Right lobe of liver (tissue), 6 donors: ENCODE measurements at regions of chr6 and their contacts with region 1.

Region 1: GRCh38 chr6:28136585-28137504 is 4.8 kb upstream of the ZKSCAN8 start:
- DNase-seq: peak; percentile 89 to 94 (median 91)
- ATAC-seq: peak; percentile 83 to 89 (median 86)
- H3K4me3 ChIP-seq: peak overlapping the region; percentile 63 to 84 (median 81)
- H3K27ac ChIP-seq: peak overlapping the region; percentile 82 to 85 (median 85)
- H3K4me1 ChIP-seq: peaks cover 0 to 10% (median 4%) of the 10 kb centered on the region in 4 donors
- H3K27me3 ChIP-seq: no peaks in the 10 kb centered on the region
- CTCF ChIP-seq: no peak
- POLR2A ChIP-seq: peak; percentile 64

Region 2: GRCh38 chr6:28368522-28368921 is 231.7 kb after region 1 on chr6:
- intact Hi-C with region 1: loop called in 1 of 2 experiments (anchors 10 kb)
- DNase-seq: no peak
- ATAC-seq: peak in 1 of 4 donors; percentile 30
- H3K4me3 ChIP-seq: no peak overlapping the region
- H3K27ac ChIP-seq: no peak overlapping the region
- H3K4me1 ChIP-seq: no peaks in the 10 kb centered on the region
- H3K27me3 ChIP-seq: no peaks in the 10 kb centered on the region
- CTCF ChIP-seq: no peak
- POLR2A ChIP-seq: no peak

Region 3: DNA sequence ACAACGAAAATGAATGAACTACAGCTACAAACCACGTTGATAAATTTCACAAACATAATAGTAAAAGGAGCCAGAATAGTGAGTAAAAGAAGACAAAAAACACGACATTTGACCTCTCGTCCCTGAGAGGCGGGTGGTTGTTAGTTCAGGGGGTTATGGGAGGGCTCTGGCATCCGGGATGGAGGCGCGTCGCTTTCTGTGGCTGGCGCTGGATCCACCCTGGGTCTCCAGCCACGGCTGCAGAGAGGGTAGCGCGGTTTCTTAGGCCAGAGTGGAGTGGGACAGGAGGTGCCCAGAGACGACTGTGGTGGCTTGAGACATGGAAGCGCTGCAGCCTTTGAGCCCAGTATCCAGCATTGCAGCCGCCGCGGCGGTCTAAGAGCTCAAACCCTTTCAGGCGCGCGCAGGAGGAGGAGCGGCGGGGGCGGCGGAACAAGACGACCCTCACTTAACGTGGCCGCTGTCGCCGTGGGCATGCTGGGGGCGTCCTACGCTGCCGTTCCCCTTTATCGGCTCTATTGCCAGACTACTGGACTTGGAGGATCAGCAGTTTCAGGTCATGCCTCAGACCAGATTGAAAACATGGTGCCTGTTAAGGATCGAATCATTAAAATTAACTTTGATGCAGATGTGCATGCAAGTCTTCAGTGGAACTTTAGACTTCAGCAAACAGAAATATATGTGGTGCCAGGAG is 310.1 kb after region 1 on chr6:
- intact Hi-C with region 1: no loop called
- DNase-seq: no peak
- ATAC-seq: no peak
- H3K4me3 ChIP-seq: no peak overlapping the region
- H3K27ac ChIP-seq: no peak overlapping the region
- H3K4me1 ChIP-seq: no peaks in the 10 kb centered on the region
- H3K27me3 ChIP-seq: no peaks in the 10 kb centered on the region
- CTCF ChIP-seq: no peak
- POLR2A ChIP-seq: no peak